HepG2 (cell line): ENCODE measurements at regions of chr1 and their contacts with region 1.

Region 1: DNA sequence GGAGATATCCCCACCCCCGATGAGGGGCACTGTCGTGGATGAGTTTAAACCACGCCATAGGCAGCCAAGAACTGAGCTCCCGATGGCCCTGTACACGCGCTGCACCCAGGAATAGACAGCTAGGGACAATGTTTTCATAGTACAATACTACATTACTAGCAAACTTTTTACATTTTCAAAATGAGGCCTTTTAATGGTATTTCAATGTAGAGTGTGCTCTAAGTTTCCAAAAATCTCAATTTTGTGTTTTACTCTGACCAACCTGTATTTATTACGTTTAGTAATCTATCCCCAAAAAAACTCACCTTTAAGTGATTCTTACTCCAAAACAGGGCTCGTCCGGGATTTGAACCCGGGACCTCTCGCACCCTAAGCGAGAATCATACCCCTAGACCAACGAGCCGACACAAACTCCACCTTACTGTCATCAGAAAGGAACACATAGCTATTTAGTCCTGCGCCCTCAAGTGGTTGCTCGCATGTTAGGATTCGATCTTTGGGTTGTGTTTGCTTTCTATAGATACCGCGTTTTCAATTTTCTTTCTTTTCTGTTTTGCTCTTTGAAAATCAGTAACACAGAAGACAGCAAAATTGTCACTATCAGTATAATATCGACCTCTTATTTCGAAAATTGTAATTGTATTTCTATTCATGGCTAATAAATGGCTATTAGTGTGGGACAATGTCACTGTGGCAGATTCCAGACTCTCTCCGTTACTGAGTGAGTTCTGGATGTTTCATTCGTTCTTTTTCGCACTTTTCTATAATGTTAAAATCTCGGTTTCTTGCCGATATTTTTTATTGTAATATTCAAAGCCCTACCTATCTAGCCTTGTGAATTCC is 6.4 kb upstream of the MPZL1 start:
- DNase-seq: peak; percentile 84
- ATAC-seq: peak; percentile 37
- H3K4me3 ChIP-seq: peak overlapping the region; percentile 95 to 100 (median 96)
- H3K27ac ChIP-seq: peak overlapping the region; percentile 83
- H3K4me1 ChIP-seq: peaks cover 54% of the 10 kb centered on the region
- H3K27me3 ChIP-seq: peaks cover 0 to 6% of the 10 kb centered on the region in 2 experiments; a peak in 2 of 5 replicates
- CTCF ChIP-seq: peak; percentile 91
- EP300 ChIP-seq: 0 out of 4 replicates have a peak, but pooled peaks of 1 of the 2 experiments have one; percentile 23
- POLR2A ChIP-seq: no peak
- RAD21 ChIP-seq: no peak

Region 2: GRCh38 chr1:167467126-167467710 is 248.2 kb before region 1 on chr1:
- CTCF ChIA-PET with region 1: no interaction called
- POLR2A ChIA-PET with region 1: no interaction called
- in situ Hi-C with region 1: no loop called
- intact Hi-C with region 1: no loop called
- DNase-seq: no peak
- ATAC-seq: peak; percentile 82
- H3K4me3 ChIP-seq: no peak overlapping the region
- H3K27ac ChIP-seq: no peak overlapping the region
- H3K4me1 ChIP-seq: peaks cover 7% of the 10 kb centered on the region; the same call in 1 of the 2 replicates
- H3K27me3 ChIP-seq: peaks cover 0 to 11% of the 10 kb centered on the region in 2 experiments; a peak in 2 of 5 replicates
- CTCF ChIP-seq: no peak
- EP300 ChIP-seq: no peak
- POLR2A ChIP-seq: no peak
- RAD21 ChIP-seq: no peak

Region 3: GRCh38 chr1:167803358-167804207 is 88.2 kb after region 1 on chr1:
- CTCF ChIA-PET with region 1: interaction called, 15 read pairs
- POLR2A ChIA-PET with region 1: no interaction called
- in situ Hi-C with region 1: loop called (anchors 5 kb)
- intact Hi-C with region 1: loop called (anchors 1 kb)
- DNase-seq: peak; percentile 90
- ATAC-seq: peak; percentile 94
- H3K4me3 ChIP-seq: peak overlapping the region in 1 of 3 experiments; percentile 21; a peak in 1 of 6 replicates
- H3K27ac ChIP-seq: no peak overlapping the region
- H3K4me1 ChIP-seq: peaks cover 29% of the 10 kb centered on the region
- H3K27me3 ChIP-seq: no peaks in the 10 kb centered on the region
- CTCF ChIP-seq: peak; percentile 96
- EP300 ChIP-seq: no peak
- POLR2A ChIP-seq: no peak
- RAD21 ChIP-seq: peak; percentile 88